ENCODE measurements at regions of chr20 and their contacts with region 1.

Region 1: GRCh38 chr20:44518248-44518647 is 3.6 kb downstream of the SERINC3 start:
- DNase-seq: no peak
- ATAC-seq: no peak
- H3K4me3 ChIP-seq: no peak overlapping the region
- H3K27ac ChIP-seq: no peak overlapping the region
- H3K4me1 ChIP-seq: peaks cover 13% of the 10 kb centered on the region; the same call in 1 of the 2 replicates
- H3K27me3 ChIP-seq: no peaks in the 10 kb centered on the region
- CTCF ChIP-seq: no peak

Region 2: DNA sequence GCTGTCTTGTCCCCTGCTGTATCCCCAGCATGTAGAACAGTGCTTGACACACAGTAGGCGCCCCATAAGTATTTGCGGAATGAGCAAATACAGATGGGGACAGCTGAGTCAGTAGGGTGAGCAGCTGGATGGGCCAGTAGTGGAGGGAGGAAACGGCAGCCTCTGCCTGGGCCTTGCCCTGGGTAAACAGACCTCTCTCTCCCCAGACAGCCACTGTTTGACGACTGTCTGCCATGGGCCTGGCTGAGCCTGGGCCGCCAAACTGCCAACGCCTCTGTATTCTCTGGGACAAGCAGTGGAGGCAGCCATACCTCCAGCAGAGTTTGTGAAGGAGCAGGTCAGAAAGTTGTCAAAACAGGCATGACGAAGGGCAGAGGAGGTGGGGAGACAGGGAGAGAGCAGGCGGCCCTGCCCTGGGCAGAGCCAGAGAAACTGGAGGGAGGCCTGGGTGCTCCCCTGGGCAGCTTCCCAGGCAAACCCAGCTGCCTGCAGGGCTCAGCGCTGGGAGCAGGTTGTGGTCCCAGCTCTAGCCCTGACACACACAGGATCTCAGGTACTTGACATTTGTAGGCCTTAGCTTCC is 147.5 kb before region 1 on chr20:
- CTCF ChIA-PET with region 1: no interaction called
- POLR2A ChIA-PET with region 1: interaction called, 13 read pairs
- in situ Hi-C with region 1: no loop called
- intact Hi-C with region 1: no loop called
- DNase-seq: no peak
- ATAC-seq: peak; percentile 79
- H3K4me3 ChIP-seq: no peak overlapping the region
- H3K27ac ChIP-seq: no peak overlapping the region
- H3K4me1 ChIP-seq: no peaks in the 10 kb centered on the region
- H3K27me3 ChIP-seq: no peaks in the 10 kb centered on the region
- CTCF ChIP-seq: no peak

Region 3: DNA sequence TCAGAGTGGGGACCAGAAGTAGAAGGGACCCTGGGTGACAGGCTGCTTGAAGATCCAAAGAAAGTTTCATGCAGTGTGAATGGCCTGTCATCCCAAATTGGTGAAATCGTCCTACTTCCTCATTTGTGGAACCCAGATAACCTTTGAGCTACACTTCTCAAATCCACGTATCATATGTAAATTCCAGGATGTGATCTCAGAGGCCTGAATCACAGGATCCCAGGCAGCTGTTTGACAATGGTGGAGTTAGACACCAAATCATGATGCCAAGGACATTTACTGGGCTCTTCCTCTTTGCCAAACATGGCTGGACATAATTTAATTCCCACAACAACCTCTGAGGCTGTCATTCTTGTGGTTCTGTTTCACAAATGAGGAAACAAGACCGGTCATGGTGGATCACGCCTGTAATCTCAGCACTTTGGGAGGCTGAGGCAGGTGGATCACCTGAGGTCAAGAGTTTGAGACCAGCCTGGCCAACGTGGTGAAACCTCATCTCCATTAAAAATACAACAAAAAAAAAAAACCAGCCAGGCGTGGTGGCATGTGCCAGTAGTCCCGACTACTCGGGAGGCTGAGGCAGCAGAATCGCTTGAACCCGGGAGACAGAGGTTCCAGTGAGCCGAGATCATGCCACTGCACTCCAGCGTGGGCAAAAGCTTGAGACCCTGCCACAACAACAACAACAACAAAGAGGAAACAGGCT is 82.5 kb before region 1 on chr20:
- CTCF ChIA-PET with region 1: no interaction called
- POLR2A ChIA-PET with region 1: no interaction called
- in situ Hi-C with region 1: no loop called
- intact Hi-C with region 1: no loop called
- DNase-seq: no peak
- ATAC-seq: no peak
- H3K4me3 ChIP-seq: no peak overlapping the region
- H3K27ac ChIP-seq: no peak overlapping the region
- H3K4me1 ChIP-seq: no peaks in the 10 kb centered on the region
- H3K27me3 ChIP-seq: no peaks in the 10 kb centered on the region; the same call in none of the 2 replicates
- CTCF ChIP-seq: no peak

Region 4: DNA sequence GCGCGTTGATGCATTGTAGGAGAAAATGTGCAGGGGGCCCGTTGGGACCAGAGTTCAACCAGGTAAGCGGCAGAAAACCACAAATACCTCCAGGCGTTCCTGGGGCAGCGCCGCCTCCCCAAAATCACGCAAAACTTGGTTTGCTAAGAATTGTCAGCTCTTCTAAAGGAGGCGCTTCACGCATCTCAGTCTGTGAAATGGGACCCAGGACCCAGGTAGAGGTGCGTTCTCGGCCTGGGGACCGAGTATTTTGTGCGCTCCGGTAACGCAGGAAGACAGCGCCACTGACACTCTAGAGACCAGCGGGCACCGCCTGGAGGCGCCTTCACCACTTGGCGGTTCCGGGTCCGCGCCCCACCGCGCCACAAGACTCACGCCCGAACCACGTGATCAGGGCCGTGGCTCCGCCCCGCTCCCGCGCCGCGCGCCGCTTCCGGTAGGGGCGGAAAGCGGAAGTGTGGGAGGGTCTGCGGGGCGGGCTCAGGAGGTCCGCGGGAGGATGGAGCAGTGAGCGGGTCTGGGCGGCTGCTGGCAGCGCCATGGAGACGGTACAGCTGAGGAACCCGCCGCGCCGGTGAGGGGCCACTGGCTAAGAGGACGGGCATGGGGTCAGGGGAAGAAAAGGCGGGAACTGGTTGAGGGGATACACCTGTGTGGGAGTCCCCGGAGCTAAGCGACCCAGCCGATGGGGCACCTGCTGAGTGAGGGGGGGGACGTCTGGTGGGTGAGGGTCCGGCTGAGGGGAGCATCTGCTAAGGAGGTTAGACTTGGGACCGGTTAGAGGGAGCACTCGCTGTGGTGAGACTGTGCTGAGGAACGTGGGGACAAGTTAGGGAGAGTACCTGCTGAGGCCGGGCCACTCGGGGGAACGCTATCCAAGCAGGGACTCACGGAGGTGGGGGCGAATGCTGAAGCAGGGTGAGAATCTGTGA is 448.0 kb after region 1 on chr20 and contains the start of gene STK4:
- CTCF ChIA-PET with region 1: no interaction called
- POLR2A ChIA-PET with region 1: no interaction called
- in situ Hi-C with region 1: no loop called
- intact Hi-C with region 1: no loop called
- DNase-seq: peak; percentile 69
- ATAC-seq: peak; percentile 98
- H3K4me3 ChIP-seq: peak within 1 kb of the TSS; percentile 94 to 99
- H3K27ac ChIP-seq: peak within 1 kb of the TSS; percentile 88
- H3K4me1 ChIP-seq: peaks cover 31% of the 10 kb centered on the region
- H3K27me3 ChIP-seq: no peaks in the 10 kb centered on the region
- CTCF ChIP-seq: peak; percentile 72
- total RNA-seq, gene STK4: 50.2 TPM

Measured in Panc1 (cell line).